ENCODE measurements at regions of chr2 and their contacts with region 1.

Region 1: GRCh38 chr2:102669401-102669800 is 50.0 kb downstream of the SLC9A2 start:
- DNase-seq: no peak
- ATAC-seq: no peak
- H3K4me3 ChIP-seq: no peak overlapping the region
- H3K27ac ChIP-seq: no peak overlapping the region
- H3K4me1 ChIP-seq: peaks cover 12% of the 10 kb centered on the region
- H3K27me3 ChIP-seq: no peaks in the 10 kb centered on the region
- CTCF ChIP-seq: no peak

Region 2: GRCh38 chr2:102632380-102633175 is 36.8 kb before region 1 on chr2:
- intact Hi-C with region 1: loop called in 1 of 2 experiments (anchors 1 kb)
- DNase-seq: no peak
- ATAC-seq: no peak
- H3K4me3 ChIP-seq: no peak overlapping the region
- H3K27ac ChIP-seq: no peak overlapping the region
- H3K4me1 ChIP-seq: peaks cover 26% of the 10 kb centered on the region
- H3K27me3 ChIP-seq: no peaks in the 10 kb centered on the region
- CTCF ChIP-seq: no peak

Region 3: DNA sequence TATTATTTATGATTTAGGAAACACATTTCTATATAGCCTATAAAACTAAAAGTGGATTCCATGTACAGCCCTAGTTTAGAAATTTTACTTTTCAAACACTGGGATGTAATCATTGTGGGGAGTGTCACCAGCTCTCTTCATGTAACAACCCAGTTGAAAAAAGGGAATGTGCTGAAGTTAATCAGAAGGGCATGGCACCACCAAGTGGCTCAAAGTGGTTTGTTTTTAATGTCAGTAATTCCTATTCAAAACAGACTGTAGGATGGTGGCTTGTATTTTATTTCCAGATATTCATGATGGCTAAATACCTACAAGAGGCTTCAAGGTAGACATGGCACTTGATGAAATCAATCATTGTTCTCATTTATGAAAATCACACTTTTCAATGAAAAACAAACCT is 34.3 kb after region 1 on chr2:
- intact Hi-C with region 1: no loop called
- DNase-seq: no peak
- ATAC-seq: peak; percentile 62 to 93 (median 76)
- H3K4me3 ChIP-seq: no peak overlapping the region
- H3K27ac ChIP-seq: no peak overlapping the region
- H3K4me1 ChIP-seq: no peaks in the 10 kb centered on the region
- H3K27me3 ChIP-seq: no peaks in the 10 kb centered on the region
- CTCF ChIP-seq: peak; percentile 52

Region 4: DNA sequence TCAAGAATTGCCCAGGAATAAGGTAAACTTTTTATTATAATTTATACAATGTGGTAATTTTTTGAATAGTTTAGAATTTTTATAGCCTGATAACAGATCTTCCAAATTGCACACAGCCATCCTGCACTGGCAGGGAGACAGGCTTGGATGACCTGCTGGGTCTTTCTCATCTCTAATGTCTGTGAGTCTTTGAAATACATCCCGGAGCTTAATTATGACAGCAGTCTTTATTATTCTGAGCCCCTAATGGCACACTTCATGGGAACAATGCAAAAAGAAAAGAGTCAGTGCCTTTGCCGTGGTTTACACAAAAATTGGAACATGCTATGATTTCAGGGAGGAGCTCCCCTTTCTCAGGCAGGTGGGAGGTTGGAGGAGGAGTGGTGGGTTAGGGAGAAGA is 163.4 kb after region 1 on chr2:
- intact Hi-C with region 1: no loop called
- DNase-seq: no peak
- ATAC-seq: no peak
- H3K4me3 ChIP-seq: no peak overlapping the region
- H3K27ac ChIP-seq: no peak overlapping the region
- H3K4me1 ChIP-seq: peaks cover 20% of the 10 kb centered on the region
- H3K27me3 ChIP-seq: no peaks in the 10 kb centered on the region
- CTCF ChIP-seq: no peak